ENCODE measurements at regions of chr13 and their contacts with region 1.

Region 1: GRCh38 chr13:90485436-90485835 is 862.1 kb upstream of the MIR17HG start:
- DNase-seq: no peak
- H3K4me3 ChIP-seq: no peak overlapping the region
- H3K27ac ChIP-seq: no peak overlapping the region
- H3K4me1 ChIP-seq: no peaks in the 10 kb centered on the region
- H3K27me3 ChIP-seq: no peaks in the 10 kb centered on the region
- CTCF ChIP-seq: no peak
- EP300 ChIP-seq: no peak
- POLR2A ChIP-seq: no peak

Region 2: GRCh38 chr13:90276216-90276615 is 209.2 kb before region 1 on chr13:
- in situ Hi-C with region 1: no loop called
- intact Hi-C with region 1: no loop called
- DNase-seq: no peak
- H3K4me3 ChIP-seq: no peak overlapping the region
- H3K27ac ChIP-seq: no peak overlapping the region
- H3K4me1 ChIP-seq: no peaks in the 10 kb centered on the region
- H3K27me3 ChIP-seq: no peaks in the 10 kb centered on the region
- CTCF ChIP-seq: no peak
- EP300 ChIP-seq: no peak
- POLR2A ChIP-seq: no peak

Region 3: DNA sequence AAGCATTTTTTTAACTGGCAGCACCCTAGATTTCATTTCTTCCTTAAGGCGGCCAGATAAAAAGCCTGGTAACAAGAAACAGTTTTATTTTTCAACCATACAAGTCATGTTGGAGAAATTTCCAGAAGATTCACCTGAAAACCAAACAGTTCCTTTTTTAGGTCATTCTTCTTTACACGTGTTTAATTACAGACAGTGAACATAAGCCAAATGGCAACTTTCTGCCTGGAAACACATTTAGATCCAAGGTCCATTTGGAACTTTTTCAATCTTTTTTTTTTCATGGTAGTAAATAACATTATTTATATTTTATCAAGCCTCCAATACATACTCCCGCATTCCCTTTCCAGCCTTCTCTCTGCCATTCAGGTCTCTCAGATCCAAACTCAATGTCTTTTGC is 24.0 kb before region 1 on chr13:
- in situ Hi-C with region 1: no loop called
- intact Hi-C with region 1: loop called (anchors 1 kb)
- DNase-seq: no peak
- H3K4me3 ChIP-seq: no peak overlapping the region
- H3K27ac ChIP-seq: no peak overlapping the region
- H3K4me1 ChIP-seq: no peaks in the 10 kb centered on the region
- H3K27me3 ChIP-seq: no peaks in the 10 kb centered on the region
- CTCF ChIP-seq: no peak
- EP300 ChIP-seq: no peak
- POLR2A ChIP-seq: no peak